ENCODE measurements at regions of chr13 and their contacts with region 1.

Region 1: GRCh38 chr13:76903544-76904162 is 17.4 kb upstream of the KCTD12 start:
- DNase-seq: peak; percentile 48
- ATAC-seq: peak; percentile 87 to 89

Region 2: DNA sequence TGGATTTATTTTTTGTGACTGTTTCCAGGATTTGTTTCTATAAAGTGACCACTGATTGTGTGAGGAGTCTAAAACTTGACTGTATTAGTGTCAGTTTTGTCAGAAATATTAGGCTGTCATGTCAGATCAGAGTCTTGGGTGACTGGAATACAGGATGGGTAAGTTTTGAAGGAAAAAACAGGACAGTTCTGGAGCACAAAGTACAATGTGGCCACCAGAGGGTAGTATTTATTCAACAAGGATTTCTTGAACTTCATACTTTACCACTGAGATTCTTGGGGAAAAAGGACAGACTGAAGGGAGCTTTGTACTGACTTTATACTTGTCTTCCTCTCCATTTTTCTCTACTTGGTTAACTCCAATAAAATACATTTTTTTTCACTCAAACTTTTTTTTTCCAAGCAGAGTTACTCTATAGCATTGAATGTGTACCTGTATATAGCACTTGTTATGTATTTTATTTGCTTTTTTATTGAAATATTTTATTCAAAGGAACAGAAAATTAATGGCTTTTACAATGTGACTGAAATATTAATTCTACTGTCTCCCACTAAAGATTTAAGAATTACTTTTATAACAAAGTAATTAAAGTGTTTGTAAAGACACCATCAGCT is 1216.4 kb before region 1 on chr13:
- intact Hi-C with region 1: loop called in 1 of 2 experiments (anchors 10 kb)
- DNase-seq: no peak
- ATAC-seq: peak in 1 of 2 donors; percentile 57

Region 3: DNA sequence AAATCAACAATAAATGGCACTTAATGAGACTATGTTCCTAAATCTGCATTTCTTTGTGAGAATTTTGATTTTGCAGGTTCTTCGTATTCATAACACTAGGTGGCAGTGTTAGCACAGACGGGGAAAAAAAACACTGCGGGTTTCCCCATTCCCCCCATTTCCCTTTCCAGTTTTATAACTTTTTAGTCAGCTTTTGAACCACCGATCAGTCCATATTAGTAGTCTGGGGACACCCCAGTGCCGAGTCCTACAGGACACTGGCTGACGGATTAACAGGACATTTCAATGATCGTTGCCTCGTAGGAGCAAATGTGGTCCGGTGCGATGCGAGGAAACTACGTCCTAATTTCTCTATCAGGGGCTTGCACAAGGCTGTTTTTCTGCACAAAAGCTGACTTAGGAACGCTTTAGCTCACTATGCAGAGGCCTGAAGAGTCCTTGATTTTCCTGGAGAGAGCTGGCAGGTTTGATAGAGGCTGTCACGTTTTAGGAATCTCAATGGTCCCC is 1033.2 kb before region 1 on chr13:
- intact Hi-C with region 1: loop called in 1 of 2 experiments (anchors 5 kb)
- DNase-seq: no peak
- ATAC-seq: peak; percentile 38 to 39

Region 4: DNA sequence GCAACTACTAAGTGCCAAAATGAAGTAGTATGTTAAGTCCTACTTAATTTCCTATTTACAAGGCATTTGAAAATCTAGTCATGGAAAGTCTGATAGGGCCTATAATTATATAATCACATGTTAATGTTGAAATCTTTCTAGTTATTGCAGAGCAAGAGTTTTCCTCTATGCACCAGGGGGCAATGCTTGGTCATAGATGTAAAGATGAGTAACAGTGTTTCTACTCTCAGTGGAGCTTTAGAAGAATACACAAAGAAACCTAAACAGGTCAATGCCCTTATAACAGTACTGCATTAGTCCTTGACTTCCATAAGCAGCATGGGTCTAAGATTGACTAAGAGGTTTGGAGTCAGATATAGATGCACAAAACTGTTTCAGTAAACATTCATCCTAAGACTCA is 236.1 kb before region 1 on chr13:
- intact Hi-C with region 1: loop called (anchors 5 kb)
- DNase-seq: no peak
- ATAC-seq: peak; percentile 56 to 78

Region 5: GRCh38 chr13:76769271-76769791 is 134.3 kb before region 1 on chr13:
- intact Hi-C with region 1: no loop called
- DNase-seq: no peak
- ATAC-seq: no peak